Left colon (tissue), 2 donors: ENCODE measurements at regions of chr5 and their contacts with region 1.

Region 1: DNA sequence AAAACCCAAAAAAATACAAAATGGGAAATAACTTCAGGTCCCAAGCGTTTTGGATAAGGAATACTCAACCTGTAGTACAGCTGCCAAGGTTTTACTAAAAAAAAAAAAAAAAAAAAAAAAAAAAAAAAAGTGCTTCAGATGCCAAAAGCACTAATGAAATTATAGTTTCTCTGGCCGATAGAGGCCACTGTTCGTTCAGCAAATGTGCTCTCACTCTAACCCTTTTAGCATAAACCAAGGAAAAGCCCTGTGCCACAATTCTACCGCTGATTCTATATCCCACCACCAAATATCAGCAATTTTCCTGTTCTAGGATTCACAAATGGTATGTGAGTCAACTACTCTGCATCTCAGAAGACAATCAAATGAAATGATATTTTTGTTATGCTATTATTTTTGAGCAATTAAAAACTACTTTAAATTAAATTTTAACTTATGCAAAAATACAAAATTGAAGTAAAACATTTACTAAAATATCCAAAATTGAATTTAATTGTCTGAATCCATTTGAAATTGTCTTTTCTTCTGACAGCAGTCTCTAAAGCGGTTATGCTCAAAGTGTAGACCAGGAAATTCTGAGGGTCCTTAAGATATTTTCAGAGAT is 79.8 kb downstream of the RICTOR start:
- DNase-seq: no peak
- ATAC-seq: peak; percentile 75

Region 2: GRCh38 chr5:39079147-39079546 is 84.7 kb after region 1 on chr5:
- intact Hi-C with region 1: loop called in 1 of 2 experiments (anchors 2 kb)
- DNase-seq: no peak
- ATAC-seq: no peak